Activated B cell treated with CpG ODN at 0.5 μM for 24 hours (primary cell): ENCODE measurements at regions of chr5 and their contacts with region 1.

Region 1: DNA sequence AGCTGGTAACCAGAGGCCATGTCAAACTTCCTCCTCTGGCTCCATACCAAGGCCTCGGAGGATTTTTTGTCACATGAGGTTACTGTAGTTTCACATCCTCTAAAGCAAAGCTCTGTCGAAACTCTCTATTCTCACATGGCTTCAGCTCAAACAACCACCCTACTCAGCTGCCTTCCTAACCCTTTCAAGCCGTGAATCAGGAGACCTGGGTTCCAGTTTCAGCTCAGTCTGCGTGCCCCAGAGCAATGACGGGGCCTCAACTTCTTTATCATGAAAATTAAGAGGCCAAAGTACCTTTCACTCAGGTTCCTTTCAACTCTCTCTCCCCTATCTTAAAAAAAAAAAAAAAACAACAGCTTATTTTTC is 145.2 kb upstream of the MAP3K1 start:
- DNase-seq: peak; percentile 51
- ATAC-seq: peak; percentile 91
- H3K4me3 Mint-ChIP-seq: peak overlapping the region; percentile 69
- H3K27ac Mint-ChIP-seq: peak overlapping the region; percentile 93
- H3K4me1 Mint-ChIP-seq: peaks cover 83% of the 10 kb centered on the region
- H3K27me3 Mint-ChIP-seq: no peaks in the 10 kb centered on the region
- CTCF ChIP-seq: no peak

Region 2: DNA sequence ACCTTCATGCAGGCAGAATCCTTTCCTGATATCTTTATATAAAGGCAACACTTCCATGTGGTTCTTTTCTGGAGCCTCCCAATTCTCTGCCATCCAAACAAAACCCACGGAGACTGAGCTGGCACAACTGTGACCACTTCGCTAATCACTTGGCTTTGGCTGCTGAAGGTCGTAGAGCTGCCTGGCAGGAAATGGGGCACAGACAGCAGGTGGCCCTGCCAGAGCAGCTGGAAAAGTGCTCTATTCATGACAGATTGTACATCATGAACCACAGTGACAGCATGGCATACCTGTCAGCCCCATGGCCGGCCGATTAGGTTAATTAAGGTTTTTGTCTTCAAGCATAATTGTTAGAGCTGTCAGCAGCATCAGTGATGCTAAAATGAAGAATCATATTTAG is 295.1 kb before region 1 on chr5:
- CTCF ChIA-PET with region 1: no interaction called
- POLR2A ChIA-PET with region 1: no interaction called
- intact Hi-C with region 1: no loop called
- DNase-seq: no peak
- ATAC-seq: no peak
- H3K4me3 Mint-ChIP-seq: no peak overlapping the region
- H3K27ac Mint-ChIP-seq: no peak overlapping the region
- H3K4me1 Mint-ChIP-seq: peaks cover 4% of the 10 kb centered on the region
- H3K27me3 Mint-ChIP-seq: no peaks in the 10 kb centered on the region
- CTCF ChIP-seq: no peak

Region 3: DNA sequence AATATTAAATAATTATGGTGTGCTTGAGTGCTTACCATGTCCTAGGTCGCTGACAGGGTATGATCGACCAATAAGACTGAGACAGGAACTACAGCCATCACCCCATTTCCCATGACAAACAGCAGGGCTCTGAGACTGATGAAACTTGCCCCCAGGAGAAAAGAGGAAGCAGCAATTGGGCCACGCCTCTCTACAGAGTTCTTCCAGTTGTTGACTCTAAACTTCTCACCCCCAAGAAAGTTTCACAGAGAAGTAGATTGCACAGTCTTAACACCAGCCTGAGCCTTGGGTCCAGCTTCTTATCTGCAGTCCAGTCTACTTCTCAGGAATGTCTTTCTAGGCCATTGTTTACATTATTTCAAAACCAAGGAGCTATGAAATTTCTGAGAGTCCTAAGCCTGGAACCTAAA is 254.7 kb before region 1 on chr5:
- CTCF ChIA-PET with region 1: no interaction called
- POLR2A ChIA-PET with region 1: interaction called, 9 read pairs
- intact Hi-C with region 1: loop called (anchors 1 kb)
- DNase-seq: peak; percentile 48
- ATAC-seq: peak; percentile 71
- H3K4me3 Mint-ChIP-seq: peak overlapping the region; percentile 78
- H3K27ac Mint-ChIP-seq: peak overlapping the region; percentile 99
- H3K4me1 Mint-ChIP-seq: peaks cover 82% of the 10 kb centered on the region
- H3K27me3 Mint-ChIP-seq: no peaks in the 10 kb centered on the region
- CTCF ChIP-seq: no peak

Region 4: DNA sequence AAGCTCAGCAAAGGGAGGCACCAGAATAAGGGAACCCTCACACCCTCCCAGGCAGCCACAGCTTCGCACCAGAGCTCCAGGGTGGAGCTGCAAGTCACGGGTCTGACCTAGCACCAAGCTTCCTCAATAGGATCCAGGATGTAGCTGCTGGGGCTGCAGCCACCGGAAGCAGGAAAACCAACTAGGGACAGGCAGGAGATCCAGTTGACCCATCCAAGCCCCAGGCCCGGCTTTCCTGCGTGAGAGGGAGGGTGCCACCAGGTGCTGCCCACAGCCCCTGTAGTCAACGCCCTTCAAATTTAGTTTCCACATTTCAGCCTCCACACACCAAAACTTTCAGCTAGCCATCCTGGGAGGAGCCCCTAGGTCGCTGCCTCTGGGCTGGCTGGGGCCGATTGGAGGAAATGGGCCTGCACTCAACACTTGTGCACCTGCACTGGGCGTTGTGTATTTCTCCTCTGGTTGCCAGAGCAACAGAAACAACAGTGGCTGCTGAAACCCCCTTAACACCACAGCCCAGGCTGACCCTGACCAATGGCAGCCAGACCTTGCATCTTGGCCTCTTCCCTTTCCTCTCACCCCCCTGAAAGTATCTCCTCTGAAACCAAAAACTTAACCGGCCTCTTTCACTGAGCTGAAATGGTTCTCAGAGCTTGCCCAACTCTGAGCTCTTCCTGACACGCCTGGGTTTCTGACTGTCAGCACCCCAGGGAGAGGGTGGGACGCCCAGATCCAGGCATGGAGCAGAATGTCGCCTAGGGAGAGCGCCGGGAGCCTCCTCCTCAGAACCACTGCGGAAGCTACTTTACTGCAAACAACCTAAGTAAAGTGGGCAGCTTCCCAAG is 81.2 kb before region 1 on chr5:
- CTCF ChIA-PET with region 1: no interaction called
- POLR2A ChIA-PET with region 1: interaction called, 22 read pairs
- intact Hi-C with region 1: loop called (anchors 1 kb)
- DNase-seq: peak; percentile 69
- ATAC-seq: peak; percentile 86
- H3K4me3 Mint-ChIP-seq: peak overlapping the region; percentile 64
- H3K27ac Mint-ChIP-seq: peak overlapping the region; percentile 97
- H3K4me1 Mint-ChIP-seq: peaks cover 69% of the 10 kb centered on the region
- H3K27me3 Mint-ChIP-seq: no peaks in the 10 kb centered on the region
- CTCF ChIP-seq: no peak

Region 5: GRCh38 chr5:56705217-56705616 is 35.1 kb after region 1 on chr5:
- CTCF ChIA-PET with region 1: interaction called, 4 read pairs
- POLR2A ChIA-PET with region 1: interaction called, 4 read pairs
- intact Hi-C with region 1: loop called (anchors 5 kb)
- DNase-seq: no peak
- ATAC-seq: no peak
- H3K4me3 Mint-ChIP-seq: no peak overlapping the region
- H3K27ac Mint-ChIP-seq: no peak overlapping the region
- H3K4me1 Mint-ChIP-seq: peaks cover 52% of the 10 kb centered on the region
- H3K27me3 Mint-ChIP-seq: no peaks in the 10 kb centered on the region
- CTCF ChIP-seq: no peak

Region 6: GRCh38 chr5:56746553-56747339 is 76.6 kb after region 1 on chr5:
- CTCF ChIA-PET with region 1: interaction called, 3 read pairs
- POLR2A ChIA-PET with region 1: interaction called, 10 read pairs
- intact Hi-C with region 1: no loop called
- DNase-seq: no peak
- ATAC-seq: no peak
- H3K4me3 Mint-ChIP-seq: no peak overlapping the region
- H3K27ac Mint-ChIP-seq: peak overlapping the region; percentile 77
- H3K4me1 Mint-ChIP-seq: peaks cover 44% of the 10 kb centered on the region
- H3K27me3 Mint-ChIP-seq: no peaks in the 10 kb centered on the region
- CTCF ChIP-seq: no peak

Region 7: DNA sequence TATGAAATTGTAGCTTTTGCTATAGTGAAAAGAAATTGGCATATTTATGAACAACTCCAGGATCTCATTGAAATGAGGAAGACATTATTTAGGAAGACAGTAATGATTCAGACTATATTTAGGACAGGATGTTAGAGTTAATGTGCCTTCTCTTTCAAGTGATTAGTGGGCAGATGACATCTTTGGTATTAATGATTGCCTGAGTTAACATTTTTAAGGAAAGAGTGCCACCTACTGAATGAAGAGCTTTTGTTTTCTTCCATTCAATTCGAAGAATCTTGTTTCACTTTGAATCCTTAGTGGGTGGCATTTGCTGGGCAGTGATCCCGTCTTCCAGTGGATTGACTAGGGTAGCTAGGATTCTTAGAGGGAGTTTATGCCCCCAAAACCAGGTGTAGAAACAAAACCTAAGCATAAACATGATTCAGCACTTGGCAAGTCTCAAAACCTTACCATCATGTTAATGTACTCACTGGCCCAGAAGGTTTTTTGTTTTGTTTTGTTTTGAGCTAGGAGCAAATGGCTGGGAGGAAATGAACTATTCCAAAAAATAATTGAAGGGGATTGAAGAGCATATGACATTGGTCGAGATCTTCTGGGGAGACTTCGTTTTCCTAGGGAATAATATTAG is 168.4 kb after region 1 on chr5:
- CTCF ChIA-PET with region 1: interaction called, 9 read pairs
- POLR2A ChIA-PET with region 1: interaction called, 10 read pairs
- intact Hi-C with region 1: loop called (anchors 1 kb)
- DNase-seq: no peak
- ATAC-seq: peak; percentile 59
- H3K4me3 Mint-ChIP-seq: peak overlapping the region; percentile 42
- H3K27ac Mint-ChIP-seq: peak overlapping the region; percentile 78
- H3K4me1 Mint-ChIP-seq: peaks cover 95% of the 10 kb centered on the region
- H3K27me3 Mint-ChIP-seq: no peaks in the 10 kb centered on the region
- CTCF ChIP-seq: no peak

Region 8: DNA sequence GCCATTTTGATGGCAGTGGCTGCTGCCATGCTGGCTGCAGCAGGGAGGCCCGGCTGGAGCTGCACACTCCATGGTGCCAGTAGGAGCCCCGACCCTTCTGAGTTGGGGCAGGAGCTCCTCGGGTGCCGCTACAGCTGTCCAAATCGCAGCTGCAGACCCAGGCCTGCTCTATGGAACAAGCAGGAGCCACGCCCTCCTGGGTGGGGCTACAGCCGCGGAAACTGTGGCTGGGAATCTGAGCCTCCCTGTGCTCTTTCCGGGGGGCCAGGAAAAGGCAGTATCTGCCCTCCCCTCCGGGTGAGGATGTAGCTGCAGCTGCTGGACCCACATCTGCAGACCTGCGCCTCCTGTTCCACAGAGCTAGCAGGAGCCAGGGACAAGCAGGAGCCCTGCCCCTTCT is 1091.4 kb after region 1 on chr5:
- CTCF ChIA-PET with region 1: no interaction called
- POLR2A ChIA-PET with region 1: no interaction called
- intact Hi-C with region 1: no loop called
- DNase-seq: no peak
- ATAC-seq: no peak
- H3K4me3 Mint-ChIP-seq: no peak overlapping the region
- H3K27ac Mint-ChIP-seq: no peak overlapping the region
- H3K4me1 Mint-ChIP-seq: no peaks in the 10 kb centered on the region
- H3K27me3 Mint-ChIP-seq: no peaks in the 10 kb centered on the region
- CTCF ChIP-seq: no peak